Activated CD4-positive, alpha-beta memory T cell treated with anti-CD3 and anti-CD28 coated beads for 36 hours (primary cell): ENCODE measurements at regions of chr1 and their contacts with region 1.

Region 1: GRCh38 chr1:167553136-167554027 is at the start of gene CREG1:
- DNase-seq: peak; percentile 94
- H3K4me3 Mint-ChIP-seq: peak within 1 kb of the TSS; percentile 84
- H3K27ac Mint-ChIP-seq: no peak within 1 kb of the TSS
- H3K4me1 Mint-ChIP-seq: peaks cover 35% of the 10 kb centered on the region
- H3K27me3 Mint-ChIP-seq: no peaks in the 10 kb centered on the region
- total RNA-seq, gene CREG1: 13.5 to 14.6 TPM

Region 2: GRCh38 chr1:167066333-167067122 is 486.9 kb before region 1 on chr1:
- CTCF ChIA-PET with region 1: interaction called, 6 read pairs
- POLR2A ChIA-PET with region 1: no interaction called
- intact Hi-C with region 1: loop called (anchors 5 kb)
- DNase-seq: peak; percentile 83
- H3K4me3 Mint-ChIP-seq: peak overlapping the region; percentile 30
- H3K27ac Mint-ChIP-seq: no peak overlapping the region
- H3K4me1 Mint-ChIP-seq: peaks cover 2% of the 10 kb centered on the region
- H3K27me3 Mint-ChIP-seq: no peaks in the 10 kb centered on the region

Region 3: GRCh38 chr1:167517535-167518330 is 35.6 kb before region 1 on chr1:
- CTCF ChIA-PET with region 1: interaction called, 5 read pairs
- POLR2A ChIA-PET with region 1: interaction called, 6 read pairs
- intact Hi-C with region 1: loop called (anchors 1 kb)
- DNase-seq: peak; percentile 96
- H3K4me3 Mint-ChIP-seq: peak overlapping the region; percentile 88
- H3K27ac Mint-ChIP-seq: peak overlapping the region; percentile 98
- H3K4me1 Mint-ChIP-seq: peaks cover 35% of the 10 kb centered on the region
- H3K27me3 Mint-ChIP-seq: no peaks in the 10 kb centered on the region

Region 4: GRCh38 chr1:167542109-167543032 is 11.0 kb before region 1 on chr1:
- CTCF ChIA-PET with region 1: interaction called, 47 read pairs
- POLR2A ChIA-PET with region 1: interaction called, 5 read pairs
- intact Hi-C with region 1: no loop called
- DNase-seq: peak; percentile 33
- H3K4me3 Mint-ChIP-seq: no peak overlapping the region
- H3K27ac Mint-ChIP-seq: peak overlapping the region; percentile 18
- H3K4me1 Mint-ChIP-seq: peaks cover 46% of the 10 kb centered on the region
- H3K27me3 Mint-ChIP-seq: no peaks in the 10 kb centered on the region

Region 5: DNA sequence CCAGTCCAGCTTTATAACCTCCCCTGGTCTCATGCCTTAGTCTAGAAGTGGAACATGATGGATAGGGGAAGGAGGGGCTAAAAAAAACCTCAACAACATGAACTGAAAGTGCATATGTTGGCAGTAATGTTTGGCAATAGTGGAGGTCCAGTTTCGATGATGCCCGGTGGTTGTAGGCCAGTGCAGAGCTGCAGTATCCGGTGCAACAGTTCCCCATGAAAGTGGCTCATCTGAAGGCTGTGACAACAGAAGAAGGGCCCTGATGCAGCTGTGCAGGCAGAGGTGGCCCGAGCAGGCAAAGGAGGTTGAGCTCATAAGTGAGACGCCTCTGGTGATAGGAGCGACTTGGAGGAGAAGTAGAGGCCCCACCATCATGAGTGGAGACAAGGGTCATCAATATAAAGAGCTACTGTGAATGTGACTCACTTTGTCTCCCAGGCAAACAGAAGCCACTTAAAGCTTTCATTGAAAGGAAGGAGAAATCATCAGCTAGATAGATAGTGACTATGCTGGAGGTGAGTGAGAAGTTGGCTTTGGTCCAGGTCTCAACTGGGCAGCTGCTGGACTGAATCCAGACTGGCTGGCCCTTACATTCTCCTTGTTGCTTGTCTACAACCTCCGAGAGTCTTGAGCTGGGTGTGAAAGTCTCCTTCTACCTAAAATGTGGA is 10.3 kb after region 1 on chr1:
- CTCF ChIA-PET with region 1: interaction called, 11 read pairs
- POLR2A ChIA-PET with region 1: no interaction called
- intact Hi-C with region 1: no loop called
- DNase-seq: no peak
- H3K4me3 Mint-ChIP-seq: no peak overlapping the region
- H3K27ac Mint-ChIP-seq: no peak overlapping the region
- H3K4me1 Mint-ChIP-seq: no peaks in the 10 kb centered on the region
- H3K27me3 Mint-ChIP-seq: no peaks in the 10 kb centered on the region

Region 6: GRCh38 chr1:167627865-167628641 is 74.7 kb after region 1 on chr1:
- CTCF ChIA-PET with region 1: interaction called, 3 read pairs
- POLR2A ChIA-PET with region 1: interaction called, 5 read pairs
- intact Hi-C with region 1: loop called (anchors 2 kb)
- DNase-seq: peak; percentile 90
- H3K4me3 Mint-ChIP-seq: peak overlapping the region; percentile 92
- H3K27ac Mint-ChIP-seq: peak overlapping the region; percentile 99
- H3K4me1 Mint-ChIP-seq: peaks cover 46% of the 10 kb centered on the region
- H3K27me3 Mint-ChIP-seq: no peaks in the 10 kb centered on the region

Region 7: DNA sequence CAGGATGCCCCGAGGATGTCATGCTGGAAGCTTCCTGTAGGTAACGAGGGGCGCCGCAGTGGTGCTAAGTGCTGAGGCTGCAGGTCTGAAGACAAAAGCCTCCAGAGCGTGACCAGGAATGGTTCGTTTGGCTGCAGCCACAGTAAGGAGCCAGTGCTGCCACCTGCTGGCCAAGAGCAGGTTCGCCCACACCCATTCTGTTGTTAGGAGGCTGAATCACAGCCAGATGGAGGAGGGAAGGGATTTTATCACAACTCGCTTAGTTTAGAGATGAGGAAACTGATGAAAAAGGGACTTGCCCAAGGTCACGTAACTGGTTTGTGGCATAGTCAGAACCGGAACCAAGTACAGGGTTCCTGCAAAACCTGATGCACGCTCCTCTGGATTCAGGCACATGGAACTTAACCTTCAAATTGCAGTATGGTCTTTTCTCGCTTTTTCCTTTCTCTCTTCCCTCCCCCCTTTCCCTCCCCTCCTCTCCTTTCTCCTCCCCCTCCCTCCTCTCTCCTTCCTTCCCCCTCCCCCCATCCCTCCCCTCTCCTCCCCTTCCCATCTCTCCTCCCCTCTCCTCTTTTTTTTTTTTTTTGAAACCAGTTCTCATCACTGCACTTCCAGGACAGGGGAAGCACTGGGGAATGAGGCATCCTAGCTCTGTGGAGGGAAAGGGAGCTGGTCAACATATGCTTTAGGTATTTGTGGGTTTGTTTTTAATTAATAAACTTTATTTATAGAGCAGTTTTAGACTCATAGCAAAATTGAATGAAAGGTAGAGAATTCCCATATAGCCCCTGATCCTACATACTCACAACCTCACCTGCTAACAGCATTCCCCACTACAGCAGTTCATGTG is 250.2 kb after region 1 on chr1:
- CTCF ChIA-PET with region 1: no interaction called
- POLR2A ChIA-PET with region 1: no interaction called
- intact Hi-C with region 1: loop called (anchors 1 kb)
- DNase-seq: peak; percentile 95
- H3K4me3 Mint-ChIP-seq: peak overlapping the region; percentile 57
- H3K27ac Mint-ChIP-seq: peak overlapping the region; percentile 90
- H3K4me1 Mint-ChIP-seq: peaks cover 26% of the 10 kb centered on the region
- H3K27me3 Mint-ChIP-seq: no peaks in the 10 kb centered on the region